ENCODE measurements at regions of chr22 and their contacts with region 1.

Region 1: DNA sequence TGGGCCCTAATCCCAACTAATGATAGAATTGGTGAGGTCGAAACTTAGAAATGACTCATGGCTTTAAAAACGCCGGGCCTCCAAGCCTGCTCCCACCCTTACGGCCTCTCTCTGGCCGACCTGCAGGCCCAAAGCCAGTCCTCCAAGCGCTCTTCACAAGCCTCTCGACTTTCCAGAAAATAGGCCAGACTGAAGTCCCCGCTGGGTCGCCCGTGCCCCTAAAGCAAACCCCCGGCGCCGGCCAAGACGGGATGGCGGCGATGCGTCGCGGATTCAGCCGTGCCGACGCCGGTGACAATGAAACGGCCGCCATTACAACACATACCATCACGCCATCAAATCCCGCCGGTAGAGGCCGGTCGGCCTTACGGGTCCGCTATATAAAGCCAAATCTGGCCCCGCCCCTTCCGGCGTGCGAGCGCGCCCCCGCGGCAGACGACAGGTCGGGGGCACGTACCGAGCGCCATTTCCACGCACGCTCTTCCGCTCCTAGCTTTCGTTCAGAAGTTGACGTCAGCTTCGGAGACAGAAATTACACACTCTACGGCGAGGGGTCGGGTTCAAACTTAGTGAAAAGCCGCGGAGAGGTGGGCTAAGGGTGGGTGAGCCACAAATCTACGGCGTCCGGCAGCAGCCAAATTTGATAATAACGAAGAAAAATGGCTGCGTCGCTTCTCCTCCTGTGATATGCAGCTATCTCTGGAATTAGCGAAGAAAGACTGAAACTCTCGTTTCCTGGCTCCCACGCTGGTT is at the start of gene RPL3:
- DNase-seq: peak; percentile 99
- H3K4me3 ChIP-seq: peak within 1 kb of the TSS; percentile 87 to 98 (median 96)
- H3K27ac ChIP-seq: peak within 1 kb of the TSS; percentile 96
- H3K4me1 ChIP-seq: peaks cover 30% of the 10 kb centered on the region
- H3K27me3 ChIP-seq: no peaks in the 10 kb centered on the region
- CTCF ChIP-seq: peak in 1 of 2 donors; percentile 5
- POLR2A ChIP-seq: peak; percentile 100
- total RNA-seq, gene RPL3: 1,954 and 2,068 TPM in 2 replicates

Region 2: GRCh38 chr22:39135090-39135896 is 184.2 kb before region 1 on chr22:
- CTCF ChIA-PET with region 1: interaction called, 24 read pairs
- POLR2A ChIA-PET with region 1: interaction called, 3 read pairs
- dilution Hi-C with region 1: no loop called
- intact Hi-C with region 1: no loop called
- DNase-seq: peak; percentile 39
- H3K4me3 ChIP-seq: no peak overlapping the region
- H3K27ac ChIP-seq: no peak overlapping the region
- H3K4me1 ChIP-seq: no peaks in the 10 kb centered on the region
- H3K27me3 ChIP-seq: no peaks in the 10 kb centered on the region
- CTCF ChIP-seq: peak; percentile 70 to 81
- POLR2A ChIP-seq: no peak

Region 3: DNA sequence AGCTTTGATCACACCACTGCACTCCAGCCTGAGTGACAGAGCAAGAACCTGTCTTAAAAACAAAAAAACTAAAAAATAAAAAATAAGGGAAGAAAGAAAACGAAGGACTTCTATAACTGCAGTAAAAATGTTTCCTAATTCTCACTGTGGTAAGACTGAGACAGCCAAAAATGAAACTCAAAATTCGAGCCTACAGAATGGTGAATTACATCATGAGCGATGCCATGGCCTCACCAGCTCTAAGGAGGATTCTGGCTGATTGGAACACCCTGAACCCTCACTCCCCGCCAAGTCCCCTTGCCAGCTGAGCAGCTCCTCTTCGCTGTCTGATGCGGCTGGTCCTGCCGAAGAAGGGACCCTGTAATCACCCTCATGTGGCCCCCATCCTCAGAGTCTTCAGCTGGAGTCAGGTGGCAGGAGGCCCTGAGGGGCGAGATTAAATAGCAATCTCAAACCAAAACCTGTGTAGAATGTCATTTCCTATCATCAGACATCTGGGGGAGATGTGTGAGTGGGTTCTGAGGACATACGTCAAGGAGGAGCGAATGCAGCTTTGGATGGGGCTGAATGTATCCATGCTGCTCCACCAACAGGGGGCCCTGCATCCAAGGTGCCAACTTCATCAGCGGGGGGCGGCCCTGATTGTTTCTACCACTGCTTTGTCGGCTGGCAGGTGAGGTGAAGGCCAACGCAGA is 103.9 kb before region 1 on chr22:
- CTCF ChIA-PET with region 1: interaction called, 3 read pairs
- POLR2A ChIA-PET with region 1: interaction called, 13 read pairs
- dilution Hi-C with region 1: no loop called
- intact Hi-C with region 1: no loop called
- DNase-seq: no peak
- H3K4me3 ChIP-seq: no peak overlapping the region
- H3K27ac ChIP-seq: no peak overlapping the region
- H3K4me1 ChIP-seq: peaks cover 16% of the 10 kb centered on the region
- H3K27me3 ChIP-seq: no peaks in the 10 kb centered on the region
- CTCF ChIP-seq: peak; percentile 22 to 45
- POLR2A ChIP-seq: no peak

Region 4: GRCh38 chr22:39244496-39245129 is 74.8 kb before region 1 on chr22 and contains the start of gene PDGFB:
- CTCF ChIA-PET with region 1: interaction called, 24 read pairs
- POLR2A ChIA-PET with region 1: interaction called, 31 read pairs
- dilution Hi-C with region 1: no loop called
- intact Hi-C with region 1: no loop called
- DNase-seq: peak; percentile 65
- H3K4me3 ChIP-seq: peak within 1 kb of the TSS; percentile 68 to 91 (median 78)
- H3K27ac ChIP-seq: peak within 1 kb of the TSS; percentile 53
- H3K4me1 ChIP-seq: peaks cover 34% of the 10 kb centered on the region
- H3K27me3 ChIP-seq: no peaks in the 10 kb centered on the region
- CTCF ChIP-seq: no peak
- POLR2A ChIP-seq: peak; percentile 99
- total RNA-seq, gene PDGFB: 240 and 273 TPM in 2 replicates

Region 5: GRCh38 chr22:39332441-39333064 is 13.1 kb after region 1 on chr22:
- CTCF ChIA-PET with region 1: interaction called, 42 read pairs
- POLR2A ChIA-PET with region 1: interaction called, 16 read pairs
- dilution Hi-C with region 1: no loop called
- intact Hi-C with region 1: no loop called
- DNase-seq: peak; percentile 81
- H3K4me3 ChIP-seq: no peak overlapping the region
- H3K27ac ChIP-seq: no peak overlapping the region
- H3K4me1 ChIP-seq: peaks cover 3% of the 10 kb centered on the region
- H3K27me3 ChIP-seq: no peaks in the 10 kb centered on the region
- CTCF ChIP-seq: no peak
- POLR2A ChIP-seq: no peak

Measured in endothelial cell of umbilical vein (primary cell).